PC-3 (cell line): ENCODE measurements at regions of chr17 and their contacts with region 1.

Region 1: DNA sequence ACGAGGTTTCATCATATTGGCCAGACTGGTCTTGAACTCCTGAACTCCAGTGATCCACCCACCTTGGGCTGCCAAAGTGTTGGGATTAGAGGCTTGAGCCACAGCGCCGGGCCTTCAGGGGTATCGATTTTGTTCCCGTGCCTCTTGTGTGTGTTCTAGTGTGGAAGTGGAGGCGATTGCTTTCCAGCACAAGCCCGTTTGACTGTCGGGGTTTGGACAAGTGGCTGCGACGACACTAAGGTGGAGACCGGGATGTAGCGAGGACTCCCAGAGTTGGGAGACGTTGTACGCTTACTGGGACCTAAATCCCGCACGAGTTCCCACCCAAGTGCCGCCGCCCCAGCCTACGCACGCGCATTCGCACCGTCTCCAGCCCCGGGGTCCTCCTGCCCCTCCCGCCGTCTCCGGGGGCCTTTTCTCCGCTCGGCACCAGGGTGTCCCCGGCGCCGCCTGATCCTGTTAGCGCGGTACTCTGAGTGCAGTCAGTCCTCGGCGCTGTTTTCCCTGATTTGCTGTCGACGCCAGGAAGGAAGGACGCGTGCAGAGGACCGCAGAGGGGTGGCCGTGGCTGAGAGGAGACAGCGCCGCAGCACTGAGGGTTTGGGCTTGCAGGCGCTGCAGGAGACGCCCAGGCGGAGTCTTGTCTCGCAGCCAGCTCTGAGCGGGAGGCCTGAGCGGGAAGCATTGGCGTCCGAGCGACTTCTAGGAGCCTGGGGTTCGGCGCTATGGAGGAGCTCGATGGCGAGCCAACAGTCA is at the start of gene NUP85:
- DNase-seq: peak; percentile 96
- ATAC-seq: peak; percentile 84
- H3K4me3 ChIP-seq: peak within 1 kb of the TSS; percentile 91
- H3K27ac ChIP-seq: peak within 1 kb of the TSS; percentile 94
- H3K4me1 ChIP-seq: peaks cover 8% of the 10 kb centered on the region; the same call in 1 of the 2 replicates
- H3K27me3 ChIP-seq: no peaks in the 10 kb centered on the region
- CTCF ChIP-seq: no peak
- total RNA-seq, gene NUP85: 91.5 and 95.6 TPM in 2 replicates

Region 2: GRCh38 chr17:74961657-74962490 is 243.3 kb before region 1 on chr17:
- CTCF ChIA-PET with region 1: interaction called, 10 read pairs
- POLR2A ChIA-PET with region 1: no interaction called
- intact Hi-C with region 1: loop called (anchors 5 kb)
- DNase-seq: peak; percentile 95
- ATAC-seq: peak; percentile 92
- H3K4me3 ChIP-seq: no peak overlapping the region
- H3K27ac ChIP-seq: no peak overlapping the region
- H3K4me1 ChIP-seq: no peaks in the 10 kb centered on the region
- H3K27me3 ChIP-seq: no peaks in the 10 kb centered on the region
- CTCF ChIP-seq: peak; percentile 93

Region 3: DNA sequence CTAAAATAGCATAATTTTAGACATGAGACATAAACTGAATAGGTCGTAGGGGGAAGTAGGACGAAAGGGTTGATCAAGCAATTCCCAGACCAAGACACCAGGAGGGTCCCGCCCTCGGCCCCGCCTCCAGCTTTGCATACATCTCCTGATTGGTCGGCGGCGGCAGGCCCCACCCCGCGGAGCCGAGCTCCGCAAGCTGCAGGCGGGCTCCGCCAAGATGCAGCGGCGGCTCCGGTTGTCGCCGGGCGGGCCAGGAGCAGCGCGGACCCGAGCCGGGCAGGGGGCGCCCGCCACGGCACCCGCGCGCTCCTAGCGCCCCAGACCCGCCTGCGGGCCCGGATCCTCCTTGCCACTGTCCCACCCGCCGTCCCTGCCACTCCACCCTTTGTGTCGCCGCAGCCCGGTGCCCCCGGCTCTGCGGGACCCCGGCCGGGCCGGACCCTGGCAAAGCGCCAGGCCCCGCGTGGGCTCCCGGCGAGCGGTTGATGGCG is 217.8 kb before region 1 on chr17 and contains the start of gene CDR2L:
- CTCF ChIA-PET with region 1: no interaction called
- POLR2A ChIA-PET with region 1: no interaction called
- intact Hi-C with region 1: no loop called
- DNase-seq: peak; percentile 97
- ATAC-seq: peak; percentile 84
- H3K4me3 ChIP-seq: peak within 1 kb of the TSS; percentile 84
- H3K27ac ChIP-seq: peak within 1 kb of the TSS; percentile 17
- H3K4me1 ChIP-seq: peaks cover 22% of the 10 kb centered on the region
- H3K27me3 ChIP-seq: no peaks in the 10 kb centered on the region
- CTCF ChIP-seq: no peak
- total RNA-seq, gene CDR2L: 35.8 and 50.9 TPM in 2 replicates

Region 4: DNA sequence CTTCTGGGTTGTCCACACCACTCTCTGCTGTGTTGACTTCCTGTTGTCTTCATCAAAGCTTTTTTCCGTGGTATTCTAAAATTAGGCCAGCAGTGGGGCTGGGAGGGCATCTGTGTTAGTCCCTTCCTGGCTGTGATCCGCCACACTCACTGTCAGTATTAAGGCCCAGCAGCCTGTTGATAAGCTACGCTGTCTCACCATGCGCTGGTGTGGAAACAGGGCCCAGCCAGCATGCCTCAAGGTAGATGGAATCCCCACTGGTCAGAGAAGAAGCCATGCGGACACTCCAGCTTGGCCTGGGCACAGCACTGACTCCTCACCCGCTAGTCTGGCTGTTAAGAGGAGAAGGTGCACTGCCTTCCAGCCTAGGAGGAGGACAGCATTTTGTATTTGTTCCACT is 206.4 kb before region 1 on chr17:
- CTCF ChIA-PET with region 1: no interaction called
- POLR2A ChIA-PET with region 1: no interaction called
- intact Hi-C with region 1: no loop called
- DNase-seq: no peak
- ATAC-seq: no peak
- H3K4me3 ChIP-seq: no peak overlapping the region
- H3K27ac ChIP-seq: no peak overlapping the region
- H3K4me1 ChIP-seq: no peaks in the 10 kb centered on the region
- H3K27me3 ChIP-seq: no peaks in the 10 kb centered on the region
- CTCF ChIP-seq: no peak

Region 5: DNA sequence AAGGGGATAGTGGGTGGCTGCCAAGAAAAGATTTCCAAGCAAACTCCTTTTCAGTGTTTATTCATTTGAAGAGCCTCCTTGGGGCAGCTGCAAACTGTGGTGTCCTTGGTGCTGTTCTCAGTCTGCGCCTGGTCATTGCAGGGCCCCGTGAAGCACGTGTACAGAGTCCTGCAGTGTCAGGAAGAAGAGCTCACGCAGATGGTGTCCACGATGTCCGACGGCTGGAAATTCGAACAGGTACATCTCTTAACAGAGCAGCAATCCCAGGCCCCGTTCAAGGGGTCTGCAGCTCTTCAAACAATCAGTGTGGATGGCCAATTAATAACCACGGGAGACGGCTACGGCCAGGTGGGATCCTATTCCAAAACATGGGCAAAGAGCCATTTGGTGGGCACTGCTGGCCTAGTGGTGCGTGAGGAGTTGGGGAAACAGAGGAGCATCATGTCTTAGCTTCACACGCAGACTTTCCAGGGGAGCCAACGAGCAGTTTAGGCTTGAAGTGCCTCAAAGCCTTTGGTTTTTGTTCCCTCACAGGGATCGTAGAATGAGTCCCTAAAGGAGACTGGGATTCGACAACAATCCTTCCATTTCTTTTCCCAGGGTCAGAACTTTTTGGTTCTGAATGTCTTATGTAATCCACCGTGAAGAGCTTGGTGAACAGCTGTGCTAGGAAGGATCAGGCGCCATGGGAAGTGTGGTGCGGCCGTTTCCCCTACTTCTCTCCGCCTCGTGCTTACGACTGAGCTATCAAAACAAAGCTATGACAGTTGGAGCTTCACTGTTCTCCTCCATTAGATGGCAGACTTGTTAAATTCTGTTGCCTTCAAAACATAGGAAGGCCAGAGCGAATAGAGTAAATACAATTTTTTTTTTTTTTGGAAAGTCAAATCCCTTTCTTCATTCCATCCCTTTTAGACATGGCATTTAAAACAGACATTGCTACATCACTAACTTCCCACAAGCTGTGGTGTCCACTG is 145.6 kb before region 1 on chr17:
- CTCF ChIA-PET with region 1: interaction called, 19 read pairs
- POLR2A ChIA-PET with region 1: no interaction called
- intact Hi-C with region 1: loop called (anchors 1 kb)
- DNase-seq: peak; percentile 60
- ATAC-seq: peak; percentile 74
- H3K4me3 ChIP-seq: no peak overlapping the region
- H3K27ac ChIP-seq: no peak overlapping the region
- H3K4me1 ChIP-seq: no peaks in the 10 kb centered on the region
- H3K27me3 ChIP-seq: no peaks in the 10 kb centered on the region
- CTCF ChIP-seq: peak; percentile 60

Region 6: DNA sequence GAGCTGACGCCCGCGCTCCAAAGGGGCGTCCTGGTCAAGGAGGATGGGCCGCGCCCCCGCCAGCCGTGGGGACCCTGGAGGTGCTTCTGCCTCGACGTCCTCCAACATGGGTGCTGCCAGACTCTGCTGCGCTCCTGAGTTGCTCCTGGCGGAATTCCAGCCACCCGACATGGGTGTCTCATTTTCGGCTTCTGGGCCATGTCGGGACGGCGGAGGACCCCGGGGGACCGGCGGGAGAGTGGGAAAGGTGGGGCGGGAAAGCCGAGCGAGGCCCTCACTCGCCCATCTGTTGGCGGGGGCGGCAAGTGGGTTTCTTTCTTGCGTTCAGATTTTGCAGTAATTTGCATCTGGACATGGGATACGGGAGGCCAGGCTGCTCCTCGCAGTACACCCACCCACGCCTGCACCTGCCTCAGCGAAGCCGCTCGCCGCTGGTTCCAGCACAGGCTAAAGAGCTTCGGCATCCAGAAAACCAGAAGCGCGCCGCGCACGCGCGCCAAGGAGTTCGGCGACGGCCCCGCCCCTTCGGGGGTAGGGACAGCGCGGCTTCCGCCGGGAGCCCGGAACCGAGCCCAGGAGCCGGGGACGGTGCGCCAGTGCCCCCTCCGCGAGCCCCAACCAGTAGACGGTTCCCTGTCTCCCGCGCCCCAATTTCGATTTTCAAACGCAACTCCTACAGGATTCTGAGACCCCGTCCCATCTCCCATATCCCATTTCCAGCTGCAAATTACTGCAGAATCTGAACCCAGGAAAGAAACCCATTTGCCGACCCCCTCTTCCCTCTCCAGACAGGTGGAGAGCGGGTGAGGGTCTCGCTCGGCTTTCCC is 95.6 kb before region 1 on chr17 and contains the start of gene ARMC7:
- CTCF ChIA-PET with region 1: interaction called, 57 read pairs
- POLR2A ChIA-PET with region 1: no interaction called
- intact Hi-C with region 1: loop called (anchors 1 kb)
- DNase-seq: peak; percentile 96
- ATAC-seq: peak; percentile 63
- H3K4me3 ChIP-seq: peak within 1 kb of the TSS; percentile 97
- H3K27ac ChIP-seq: no peak within 1 kb of the TSS
- H3K4me1 ChIP-seq: peaks cover 35% of the 10 kb centered on the region
- H3K27me3 ChIP-seq: no peaks in the 10 kb centered on the region
- CTCF ChIP-seq: peak; percentile 19; the same call in 1 of the 2 replicates
- total RNA-seq, gene ARMC7: 17.0 and 17.3 TPM in 2 replicates

Region 7: DNA sequence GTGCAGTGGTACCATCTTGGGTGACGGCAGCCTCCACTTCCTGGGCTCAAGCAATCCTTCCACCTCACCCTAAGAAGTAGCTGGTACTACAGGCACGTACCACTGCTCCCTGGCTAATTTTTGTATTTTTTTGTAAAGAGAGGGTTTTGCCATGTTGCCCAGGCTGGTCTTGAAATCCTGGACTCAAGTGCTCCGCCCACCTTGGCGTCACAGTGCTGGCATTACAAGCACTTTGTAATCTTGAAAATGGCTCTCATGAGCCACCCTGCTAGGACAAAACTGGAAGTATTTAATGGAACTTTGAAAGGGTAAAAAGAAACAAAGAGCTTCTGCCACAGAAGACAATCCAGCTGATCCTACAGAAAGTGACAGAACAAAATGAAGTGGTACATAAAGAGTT is 31.7 kb before region 1 on chr17:
- CTCF ChIA-PET with region 1: interaction called, 10 read pairs
- POLR2A ChIA-PET with region 1: no interaction called
- intact Hi-C with region 1: no loop called
- DNase-seq: no peak
- ATAC-seq: no peak
- H3K4me3 ChIP-seq: no peak overlapping the region
- H3K27ac ChIP-seq: no peak overlapping the region
- H3K4me1 ChIP-seq: no peaks in the 10 kb centered on the region
- H3K27me3 ChIP-seq: no peaks in the 10 kb centered on the region
- CTCF ChIP-seq: no peak

Region 8: DNA sequence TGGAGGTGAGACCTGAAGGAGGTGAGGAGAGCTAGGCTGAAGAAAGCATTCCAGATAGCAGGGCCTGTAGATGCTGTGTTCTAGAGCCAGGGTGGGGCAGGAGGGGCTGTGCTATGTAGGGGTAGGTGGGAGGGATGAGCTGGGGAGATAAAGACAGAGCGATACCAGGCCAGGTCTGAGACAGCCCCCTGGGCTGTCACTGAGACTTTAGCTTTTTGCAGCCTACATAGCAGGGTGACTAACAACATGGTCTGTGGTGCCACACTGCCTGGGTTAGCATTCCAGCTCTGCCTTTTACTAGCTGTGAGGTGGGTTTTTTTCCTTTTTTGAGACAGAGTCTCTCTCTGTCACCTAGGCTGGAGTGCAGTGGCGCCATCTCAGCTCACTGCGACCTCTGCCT is 14.6 kb after region 1 on chr17:
- CTCF ChIA-PET with region 1: interaction called, 3 read pairs
- POLR2A ChIA-PET with region 1: interaction called, 14 read pairs
- intact Hi-C with region 1: no loop called
- DNase-seq: no peak
- ATAC-seq: no peak
- H3K4me3 ChIP-seq: no peak overlapping the region
- H3K27ac ChIP-seq: no peak overlapping the region
- H3K4me1 ChIP-seq: no peaks in the 10 kb centered on the region
- H3K27me3 ChIP-seq: no peaks in the 10 kb centered on the region
- CTCF ChIP-seq: no peak

Region 9: DNA sequence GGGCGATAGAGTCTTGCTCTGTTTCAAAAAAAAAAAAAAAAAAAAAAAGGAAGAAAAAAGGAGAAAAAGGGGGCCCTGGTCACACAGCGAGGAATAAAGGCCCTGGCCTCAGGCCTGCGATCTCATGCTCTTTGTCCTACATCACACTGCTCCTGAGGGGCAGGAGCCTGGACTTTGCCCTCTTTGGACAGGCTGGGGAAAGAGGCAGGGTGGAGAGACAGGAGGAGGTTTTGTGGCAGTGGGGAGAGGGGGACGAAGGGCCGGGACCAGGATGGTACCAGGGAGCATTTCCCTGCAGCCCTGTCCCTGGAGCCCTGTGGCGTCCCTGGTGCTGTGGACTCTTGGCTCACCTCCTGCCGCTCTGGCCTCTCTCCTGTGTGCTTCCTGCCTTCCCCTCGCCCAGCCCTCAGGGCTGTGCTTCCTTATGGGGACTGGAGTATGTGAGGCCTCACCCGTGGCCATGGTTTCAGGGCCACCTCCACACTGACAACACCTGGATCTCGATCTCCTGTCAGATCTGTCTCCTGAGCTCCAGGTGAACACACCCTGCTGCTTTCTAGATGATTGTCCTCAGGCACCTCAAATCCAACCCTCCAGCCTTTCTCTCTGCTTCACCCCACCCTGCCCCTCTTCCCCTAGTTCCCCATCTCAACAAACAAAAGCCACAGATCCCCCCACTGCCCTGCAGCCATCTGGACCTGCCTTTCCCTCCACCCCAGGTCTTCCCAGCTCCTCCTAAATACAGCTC is 104.0 kb after region 1 on chr17:
- CTCF ChIA-PET with region 1: no interaction called
- POLR2A ChIA-PET with region 1: no interaction called
- intact Hi-C with region 1: no loop called
- DNase-seq: no peak
- ATAC-seq: peak; percentile 28
- H3K4me3 ChIP-seq: no peak overlapping the region
- H3K27ac ChIP-seq: no peak overlapping the region
- H3K4me1 ChIP-seq: no peaks in the 10 kb centered on the region
- H3K27me3 ChIP-seq: no peaks in the 10 kb centered on the region
- CTCF ChIP-seq: no peak